ENCODE measurements at regions of chr5 and their contacts with region 1.

Region 1: GRCh38 chr5:180784497-180785097 is 18.0 kb downstream of the MGAT1 start:
- DNase-seq: peak; percentile 78
- H3K4me3 ChIP-seq: no peak overlapping the region
- H3K27ac ChIP-seq: peak overlapping the region; percentile 64 to 72
- H3K4me1 ChIP-seq: peaks cover 16% of the 10 kb centered on the region
- H3K27me3 ChIP-seq: no peaks in the 10 kb centered on the region
- CTCF ChIP-seq: peak; percentile 49 to 80 (median 68)
- POLR2A ChIP-seq: no peak

Region 2: DNA sequence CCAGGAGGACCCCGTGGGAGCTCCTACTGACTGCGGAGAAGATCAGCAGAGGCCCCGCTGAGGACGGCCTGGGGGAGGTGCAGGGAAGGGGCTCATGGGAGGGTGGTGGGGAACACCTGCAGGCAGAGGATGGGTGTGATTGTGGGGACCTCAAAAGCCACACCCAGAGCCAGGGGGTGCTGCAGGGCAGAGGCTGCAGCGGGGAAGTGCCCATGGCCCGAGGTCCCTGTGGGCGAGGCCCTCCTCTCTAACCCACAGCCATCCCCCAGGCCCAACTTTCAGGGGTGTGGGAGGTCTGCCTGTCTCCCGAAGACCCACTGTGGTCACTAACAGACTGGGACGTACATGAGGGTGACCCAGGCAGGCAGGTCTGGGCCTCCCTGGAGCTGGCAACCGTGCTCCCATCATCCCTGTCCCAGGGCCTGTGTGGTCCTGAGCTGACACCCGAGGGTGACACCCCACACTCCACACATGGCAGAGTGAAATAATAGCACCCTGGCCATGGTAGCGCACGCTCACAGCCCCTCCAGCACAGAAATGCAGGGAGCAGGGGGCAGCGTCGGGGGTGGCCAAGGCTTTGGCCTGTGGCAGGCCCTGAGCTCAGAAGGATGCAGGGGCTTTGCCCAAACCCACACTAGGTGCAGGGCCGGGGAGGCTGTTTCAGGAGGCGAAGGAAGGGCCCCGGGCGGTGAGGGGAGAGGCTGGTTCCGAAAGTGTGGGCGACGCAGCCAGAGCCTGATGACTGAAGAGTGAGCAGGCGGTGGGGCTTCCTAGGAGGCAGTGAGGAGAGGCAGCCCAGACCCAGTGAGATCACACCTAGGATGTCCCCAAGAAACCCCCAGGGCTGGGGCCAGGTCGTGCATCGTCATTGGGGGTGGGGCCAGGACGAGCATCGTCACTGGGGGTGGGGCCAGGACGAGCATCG is 375.5 kb after region 1 on chr5:
- intact Hi-C with region 1: loop called (anchors 5 kb)
- DNase-seq: no peak
- H3K4me3 ChIP-seq: no peak overlapping the region
- H3K27ac ChIP-seq: no peak overlapping the region
- H3K4me1 ChIP-seq: no peaks in the 10 kb centered on the region
- H3K27me3 ChIP-seq: no peaks in the 10 kb centered on the region
- CTCF ChIP-seq: no peak
- POLR2A ChIP-seq: no peak

Region 3: DNA sequence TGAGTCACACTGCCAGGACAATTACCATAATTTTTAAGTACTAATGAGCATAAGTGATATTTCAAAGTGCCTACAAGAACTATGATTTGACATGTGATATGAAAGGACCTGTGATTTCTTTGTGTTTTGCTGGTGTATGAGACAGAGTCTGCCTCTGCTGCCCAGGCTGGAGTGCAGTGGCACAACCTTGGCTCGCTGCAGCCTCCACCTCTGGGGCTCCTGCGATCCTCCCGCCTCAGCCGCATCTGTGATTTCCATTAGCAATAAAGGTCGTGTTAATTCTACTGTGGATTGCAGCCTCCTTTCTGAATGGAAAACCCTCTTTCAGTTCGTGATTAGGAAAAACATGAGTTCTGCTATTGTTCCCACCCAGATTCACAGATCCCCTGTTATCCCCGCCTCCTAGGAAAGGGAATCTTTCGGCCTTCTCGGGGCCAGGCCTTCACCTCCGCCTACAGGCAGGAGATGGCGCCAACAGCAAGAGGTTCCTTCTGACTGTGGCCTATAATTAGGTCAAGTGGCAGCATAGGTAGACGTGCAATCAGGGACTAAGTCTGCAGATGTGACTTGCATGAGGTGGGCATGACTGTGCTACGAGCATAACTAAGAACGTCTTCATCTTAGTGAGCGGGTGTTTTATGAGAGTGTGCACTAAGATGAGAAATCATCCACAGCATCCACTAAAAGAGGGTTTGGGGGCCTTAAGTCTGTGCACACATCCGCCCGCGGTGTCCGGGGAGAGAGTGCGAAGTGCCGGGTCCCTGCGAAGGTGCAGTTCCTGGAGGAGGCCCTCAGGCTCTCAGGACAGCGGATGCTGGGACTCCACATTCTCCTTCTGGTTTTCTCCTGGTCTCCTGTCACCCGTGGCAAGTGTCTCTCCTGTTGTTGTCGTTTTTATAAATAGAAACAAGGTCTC is 397.3 kb after region 1 on chr5:
- intact Hi-C with region 1: loop called (anchors 5 kb)
- DNase-seq: no peak
- H3K4me3 ChIP-seq: no peak overlapping the region
- H3K27ac ChIP-seq: no peak overlapping the region
- H3K4me1 ChIP-seq: no peaks in the 10 kb centered on the region
- H3K27me3 ChIP-seq: no peaks in the 10 kb centered on the region
- CTCF ChIP-seq: peak; percentile 28 to 84 (median 61)
- POLR2A ChIP-seq: no peak

Measured in prostate gland (tissue), 2 donors.